Activated T-helper 1 cell treated with anti-CD3 and anti-CD28 coated beads, Interleukin-12 subunit alpha, Interleukin-12 subunit beta, Interleukin-2, Interleukin-4 antibody, amounts not matched to agents 30 ng/mL and 10 ng/mL and 1 ng/mL, durations not matched to agents 14 hours and 24 hours and 36 hours (primary cell): ENCODE measurements at regions of chr4 and their contacts with region 1.

Region 1: GRCh38 chr4:146916479-146917076 is 29.1 kb downstream of the TTC29 start:
- DNase-seq: no peak
- H3K4me3 Mint-ChIP-seq: no peak overlapping the region
- H3K27ac Mint-ChIP-seq: no peak overlapping the region
- H3K4me1 Mint-ChIP-seq: no peaks in the 10 kb centered on the region
- H3K27me3 Mint-ChIP-seq: peaks cover 4% of the 10 kb centered on the region

Region 2: GRCh38 chr4:145234091-145234706 is 1682.4 kb before region 1 on chr4:
- intact Hi-C with region 1: loop called (anchors 10 kb)
- DNase-seq: peak; percentile 20
- H3K4me3 Mint-ChIP-seq: no peak overlapping the region
- H3K27ac Mint-ChIP-seq: no peak overlapping the region
- H3K4me1 Mint-ChIP-seq: no peaks in the 10 kb centered on the region
- H3K27me3 Mint-ChIP-seq: peaks cover 7% of the 10 kb centered on the region

Region 3: GRCh38 chr4:145956288-145956890 is 960.2 kb before region 1 on chr4:
- intact Hi-C with region 1: loop called (anchors 1 kb)
- DNase-seq: no peak
- H3K4me3 Mint-ChIP-seq: no peak overlapping the region
- H3K27ac Mint-ChIP-seq: no peak overlapping the region
- H3K4me1 Mint-ChIP-seq: peaks cover 5% of the 10 kb centered on the region
- H3K27me3 Mint-ChIP-seq: peaks cover 4% of the 10 kb centered on the region

Region 4: GRCh38 chr4:146095091-146095690 is 821.4 kb before region 1 on chr4:
- intact Hi-C with region 1: loop called (anchors 1 kb)
- DNase-seq: no peak
- H3K4me3 Mint-ChIP-seq: no peak overlapping the region
- H3K27ac Mint-ChIP-seq: no peak overlapping the region
- H3K4me1 Mint-ChIP-seq: peaks cover 4% of the 10 kb centered on the region
- H3K27me3 Mint-ChIP-seq: peaks cover 15% of the 10 kb centered on the region

Region 5: DNA sequence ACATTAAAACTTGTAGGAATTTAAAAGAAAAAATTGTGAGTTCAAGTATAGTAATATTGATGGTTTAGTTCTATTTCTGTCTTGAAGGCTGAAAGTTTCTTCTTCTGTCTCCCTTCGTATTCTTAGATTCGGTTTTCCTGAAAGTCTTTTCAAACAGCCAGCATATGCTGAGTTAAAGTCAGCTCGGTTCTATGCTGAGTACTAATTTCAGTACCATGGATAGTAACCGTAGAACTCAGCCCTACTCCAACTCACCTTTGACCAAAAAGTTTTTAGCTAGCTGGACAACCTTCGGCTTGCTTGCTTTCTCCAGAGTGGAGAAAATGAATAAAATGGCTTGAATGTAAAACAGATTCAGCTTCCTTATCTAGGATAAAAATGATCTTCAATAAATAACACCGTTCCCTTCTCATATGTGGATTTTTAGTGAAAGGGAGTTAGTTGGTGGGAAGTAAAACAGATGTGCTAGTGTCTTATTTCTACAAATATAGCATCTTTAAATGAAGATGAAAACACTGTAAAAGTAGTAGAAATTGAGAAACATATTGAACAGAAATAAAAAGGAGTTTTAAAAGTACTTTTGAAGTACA is 272.7 kb before region 1 on chr4:
- intact Hi-C with region 1: no loop called
- DNase-seq: no peak
- H3K4me3 Mint-ChIP-seq: no peak overlapping the region
- H3K27ac Mint-ChIP-seq: no peak overlapping the region
- H3K4me1 Mint-ChIP-seq: no peaks in the 10 kb centered on the region
- H3K27me3 Mint-ChIP-seq: peaks cover 59% of the 10 kb centered on the region

Region 6: DNA sequence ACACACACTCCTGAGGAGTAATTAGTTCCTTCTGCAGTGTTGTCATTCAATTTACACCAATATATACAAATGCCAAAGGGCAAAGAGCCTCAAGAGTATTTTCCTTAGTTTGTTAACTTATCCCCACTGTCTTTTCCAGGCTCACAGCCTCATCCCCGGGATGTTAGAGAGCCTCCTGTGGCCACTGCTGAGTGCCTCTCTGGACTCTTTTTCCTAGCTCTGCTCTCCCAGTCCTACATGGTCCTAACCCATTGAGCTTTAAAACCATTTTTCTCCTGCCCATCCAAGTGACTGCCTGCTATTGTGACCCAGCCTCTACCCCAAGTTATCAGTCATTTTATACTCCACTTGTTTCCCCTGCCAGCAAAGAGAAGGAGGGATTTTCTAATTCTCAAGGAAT is 52.5 kb after region 1 on chr4:
- intact Hi-C with region 1: no loop called
- DNase-seq: no peak
- H3K4me3 Mint-ChIP-seq: no peak overlapping the region
- H3K27ac Mint-ChIP-seq: no peak overlapping the region
- H3K4me1 Mint-ChIP-seq: no peaks in the 10 kb centered on the region
- H3K27me3 Mint-ChIP-seq: peaks cover 1% of the 10 kb centered on the region